Heart right ventricle (tissue), 16 donors: ENCODE measurements at regions of chr2 and their contacts with region 1.

Region 1: GRCh38 chr2:231925303-231926179 is 655 bp downstream of the NPPC start:
- DNase-seq: peak; percentile 84 to 87
- ATAC-seq: peak; percentile 80 to 95 (median 90)
- H3K4me3 ChIP-seq: peak overlapping the region; percentile 30 to 59 (median 54)
- H3K27ac ChIP-seq: peak overlapping the region in 1 of 10 donors; percentile 15
- H3K4me1 ChIP-seq: peaks cover 8 to 38% (median 23%) of the 10 kb centered on the region in 9 donors
- H3K27me3 ChIP-seq: peaks cover 14 to 94% (median 80%) of the 10 kb centered on the region in 7 donors
- CTCF ChIP-seq: peak; percentile 85 to 97 (median 94)

Region 2: DNA sequence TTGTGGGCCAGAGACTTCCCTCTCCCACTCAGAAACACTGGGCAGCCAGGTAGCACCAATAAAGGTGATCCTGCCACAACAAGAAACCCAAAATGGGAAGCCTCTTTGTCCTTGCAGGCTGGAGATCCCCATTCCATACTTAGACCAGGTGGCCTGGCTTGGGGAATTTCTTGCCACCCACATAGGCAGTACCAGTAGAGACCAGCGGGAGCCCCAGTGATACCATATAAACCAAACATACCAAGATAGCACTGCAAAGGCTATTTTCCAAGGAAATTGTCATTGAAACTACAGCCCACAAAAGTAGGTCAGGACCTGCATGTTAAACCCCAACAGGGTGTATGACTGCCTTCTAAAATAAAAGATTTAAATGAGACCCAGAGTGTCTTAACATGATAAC is 207.5 kb after region 1 on chr2:
- intact Hi-C with region 1: loop called in 1 of 10 experiments (anchors 5 kb)
- DNase-seq: no peak
- ATAC-seq: no peak
- H3K4me3 ChIP-seq: no peak overlapping the region
- H3K27ac ChIP-seq: no peak overlapping the region
- H3K4me1 ChIP-seq: peaks cover 0 to 15% (median 4%) of the 10 kb centered on the region in 9 donors
- H3K27me3 ChIP-seq: no peaks in the 10 kb centered on the region
- CTCF ChIP-seq: no peak

Region 3: GRCh38 chr2:232142049-232142448 is 216.5 kb after region 1 on chr2:
- intact Hi-C with region 1: loop called (anchors 1 to 5 kb)
- DNase-seq: peak in 1 of 2 donors; percentile 32
- ATAC-seq: peak in 6 of 8 donors; percentile 35 to 76 (median 58)
- H3K4me3 ChIP-seq: no peak overlapping the region
- H3K27ac ChIP-seq: no peak overlapping the region
- H3K4me1 ChIP-seq: peaks cover 0 to 18% (median 4%) of the 10 kb centered on the region in 9 donors
- H3K27me3 ChIP-seq: no peaks in the 10 kb centered on the region
- CTCF ChIP-seq: peak in 8 of 9 donors; percentile 50 to 79 (median 70)

Region 4: GRCh38 chr2:232327105-232328041 is 401.8 kb after region 1 on chr2:
- intact Hi-C with region 1: loop called (anchors 2 to 10 kb)
- DNase-seq: peak; percentile 58 to 71
- ATAC-seq: peak in 7 of 8 donors; percentile 35 to 73 (median 66)
- H3K4me3 ChIP-seq: no peak overlapping the region
- H3K27ac ChIP-seq: no peak overlapping the region
- H3K4me1 ChIP-seq: peaks cover 0 to 11% (median 3%) of the 10 kb centered on the region in 9 donors
- H3K27me3 ChIP-seq: no peaks in the 10 kb centered on the region
- CTCF ChIP-seq: peak; percentile 56 to 84 (median 78)

Region 5: DNA sequence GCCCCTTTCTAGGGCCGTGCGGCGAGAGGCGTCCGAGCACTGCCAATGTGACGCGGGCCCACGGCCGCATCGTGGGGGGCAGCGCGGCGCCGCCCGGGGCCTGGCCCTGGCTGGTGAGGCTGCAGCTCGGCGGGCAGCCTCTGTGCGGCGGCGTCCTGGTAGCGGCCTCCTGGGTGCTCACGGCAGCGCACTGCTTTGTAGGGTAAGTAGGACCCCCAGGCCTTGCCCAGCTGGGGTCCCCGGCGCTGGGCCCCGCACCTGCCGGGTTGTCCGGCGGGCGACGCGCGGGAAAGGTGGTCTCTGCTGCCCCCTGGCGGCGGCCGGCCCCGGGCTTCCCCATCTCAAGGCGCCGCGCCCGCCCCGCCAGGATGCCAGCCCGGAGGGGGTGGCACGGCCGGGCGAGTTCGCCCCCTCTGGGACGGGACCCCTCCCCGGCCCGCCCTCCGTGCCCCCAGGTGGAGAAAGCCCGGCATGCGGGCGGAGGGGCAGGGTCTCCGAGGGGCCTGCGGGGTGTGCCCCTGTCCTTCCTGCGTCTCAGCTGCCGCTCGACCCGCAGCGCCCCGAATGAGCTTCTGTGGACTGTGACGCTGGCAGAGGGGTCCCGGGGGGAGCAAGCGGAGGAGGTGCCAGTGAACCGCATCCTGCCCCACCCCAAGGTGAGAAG is 596.5 kb after region 1 on chr2:
- intact Hi-C with region 1: loop called in 1 of 10 experiments (anchors 5 kb)
- DNase-seq: peak; percentile 22 to 67
- ATAC-seq: peak in 6 of 8 donors; percentile 33 to 68 (median 52)
- H3K4me3 ChIP-seq: peak overlapping the region in 9 of 10 donors; percentile 15 to 38 (median 23)
- H3K27ac ChIP-seq: no peak overlapping the region
- H3K4me1 ChIP-seq: peaks cover 5 to 39% (median 31%) of the 10 kb centered on the region in 9 donors
- H3K27me3 ChIP-seq: peaks cover 20 to 85% (median 80%) of the 10 kb centered on the region in 7 donors
- CTCF ChIP-seq: peak; percentile 81 to 95 (median 92)